Heart left ventricle (tissue), 16 donors: ENCODE measurements at regions of chr20 and their contacts with region 1.

Region 1: GRCh38 chr20:57231951-57232428 is 34.5 kb downstream of the BMP7 start:
- DNase-seq: no peak
- ATAC-seq: no peak
- H3K4me3 ChIP-seq: no peak overlapping the region
- H3K27ac ChIP-seq: no peak overlapping the region
- H3K4me1 ChIP-seq: no peaks in the 10 kb centered on the region
- H3K27me3 ChIP-seq: peaks cover 0 to 15% (median 3%) of the 10 kb centered on the region in 9 donors
- CTCF ChIP-seq: no peak
- POLR2A ChIP-seq: no peak

Region 2: GRCh38 chr20:57030611-57031600 is 201.1 kb before region 1 on chr20:
- intact Hi-C with region 1: no loop called
- DNase-seq: no peak
- ATAC-seq: no peak
- H3K4me3 ChIP-seq: no peak overlapping the region
- H3K27ac ChIP-seq: no peak overlapping the region
- H3K4me1 ChIP-seq: no peaks in the 10 kb centered on the region
- H3K27me3 ChIP-seq: peaks cover 0 to 47% (median 4%) of the 10 kb centered on the region in 9 donors
- CTCF ChIP-seq: no peak
- POLR2A ChIP-seq: no peak

Region 3: GRCh38 chr20:57180406-57181353 is 51.3 kb before region 1 on chr20:
- intact Hi-C with region 1: loop called in 1 of 10 experiments (anchors 10 kb)
- DNase-seq: no peak
- ATAC-seq: no peak
- H3K4me3 ChIP-seq: no peak overlapping the region
- H3K27ac ChIP-seq: no peak overlapping the region
- H3K4me1 ChIP-seq: no peaks in the 10 kb centered on the region
- H3K27me3 ChIP-seq: peaks cover 0 to 5% (median 0%) of the 10 kb centered on the region in 9 donors
- CTCF ChIP-seq: no peak
- POLR2A ChIP-seq: no peak

Region 4: GRCh38 chr20:57244627-57245214 is 12.7 kb after region 1 on chr20:
- intact Hi-C with region 1: no loop called
- DNase-seq: no peak
- ATAC-seq: peak in 1 of 4 donors; percentile 25
- H3K4me3 ChIP-seq: no peak overlapping the region
- H3K27ac ChIP-seq: no peak overlapping the region
- H3K4me1 ChIP-seq: peaks cover 0 to 8% (median 0%) of the 10 kb centered on the region in 12 donors
- H3K27me3 ChIP-seq: peaks cover 0 to 9% (median 0%) of the 10 kb centered on the region in 9 donors
- CTCF ChIP-seq: no peak
- POLR2A ChIP-seq: no peak